ENCODE measurements at regions of chr4 and their contacts with region 1.

Region 1: DNA sequence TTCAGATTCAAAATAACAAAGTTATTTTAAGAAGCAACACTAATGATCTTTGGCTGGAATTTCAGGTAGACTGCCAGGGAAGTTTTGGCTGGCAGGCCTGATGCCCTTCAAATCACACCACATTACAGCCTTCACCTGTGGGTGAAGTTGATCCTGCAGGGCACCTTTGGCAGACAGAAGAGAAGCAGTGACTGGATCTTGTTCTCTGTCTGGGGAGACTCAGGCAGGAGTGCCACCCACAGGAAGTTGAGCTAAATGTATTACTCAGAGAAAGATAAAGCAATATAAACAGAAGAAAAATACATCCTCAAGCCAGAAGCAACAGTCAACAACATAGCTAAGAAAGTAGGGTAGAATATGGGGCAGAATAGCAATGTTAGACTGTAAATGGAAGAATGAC is 12.8 kb upstream of the CFAP299 start:
- DNase-seq: peak; percentile 63
- H3K4me3 Mint-ChIP-seq: no peak overlapping the region
- H3K27ac Mint-ChIP-seq: no peak overlapping the region
- H3K4me1 Mint-ChIP-seq: peaks cover 7% of the 10 kb centered on the region
- H3K27me3 Mint-ChIP-seq: no peaks in the 10 kb centered on the region
- CTCF ChIP-seq: peak; percentile 49

Region 2: GRCh38 chr4:79042079-79042674 is 1280.5 kb before region 1 on chr4:
- CTCF ChIA-PET with region 1: no interaction called
- POLR2A ChIA-PET with region 1: no interaction called
- intact Hi-C with region 1: loop called (anchors 10 kb)
- DNase-seq: peak; percentile 59
- H3K4me3 Mint-ChIP-seq: no peak overlapping the region
- H3K27ac Mint-ChIP-seq: no peak overlapping the region
- H3K4me1 Mint-ChIP-seq: no peaks in the 10 kb centered on the region
- H3K27me3 Mint-ChIP-seq: no peaks in the 10 kb centered on the region
- CTCF ChIP-seq: peak; percentile 56

Region 3: DNA sequence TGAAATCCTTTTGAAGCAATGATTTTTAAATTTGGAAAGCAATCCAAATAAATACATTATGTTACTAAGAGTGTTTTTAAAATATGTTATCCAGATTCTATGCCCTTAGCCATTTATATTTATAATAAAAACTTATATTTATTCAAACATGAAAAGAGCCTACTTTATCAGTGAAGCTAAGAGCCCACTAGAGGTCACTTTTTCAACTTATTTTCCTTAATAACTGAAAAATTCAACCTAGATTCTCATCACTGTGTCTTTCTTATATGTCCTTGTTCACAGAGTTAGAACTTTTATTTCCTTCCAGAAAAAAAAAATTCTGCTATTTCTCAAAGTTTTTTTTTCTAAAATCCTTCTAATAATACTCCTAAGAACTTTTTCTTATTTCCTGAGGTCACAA is 101.6 kb before region 1 on chr4:
- CTCF ChIA-PET with region 1: interaction called, 56 read pairs
- POLR2A ChIA-PET with region 1: interaction called, 6 read pairs
- intact Hi-C with region 1: loop called (anchors 1 kb)
- DNase-seq: peak; percentile 34
- H3K4me3 Mint-ChIP-seq: no peak overlapping the region
- H3K27ac Mint-ChIP-seq: no peak overlapping the region
- H3K4me1 Mint-ChIP-seq: no peaks in the 10 kb centered on the region
- H3K27me3 Mint-ChIP-seq: no peaks in the 10 kb centered on the region
- CTCF ChIP-seq: peak; percentile 23

Region 4: DNA sequence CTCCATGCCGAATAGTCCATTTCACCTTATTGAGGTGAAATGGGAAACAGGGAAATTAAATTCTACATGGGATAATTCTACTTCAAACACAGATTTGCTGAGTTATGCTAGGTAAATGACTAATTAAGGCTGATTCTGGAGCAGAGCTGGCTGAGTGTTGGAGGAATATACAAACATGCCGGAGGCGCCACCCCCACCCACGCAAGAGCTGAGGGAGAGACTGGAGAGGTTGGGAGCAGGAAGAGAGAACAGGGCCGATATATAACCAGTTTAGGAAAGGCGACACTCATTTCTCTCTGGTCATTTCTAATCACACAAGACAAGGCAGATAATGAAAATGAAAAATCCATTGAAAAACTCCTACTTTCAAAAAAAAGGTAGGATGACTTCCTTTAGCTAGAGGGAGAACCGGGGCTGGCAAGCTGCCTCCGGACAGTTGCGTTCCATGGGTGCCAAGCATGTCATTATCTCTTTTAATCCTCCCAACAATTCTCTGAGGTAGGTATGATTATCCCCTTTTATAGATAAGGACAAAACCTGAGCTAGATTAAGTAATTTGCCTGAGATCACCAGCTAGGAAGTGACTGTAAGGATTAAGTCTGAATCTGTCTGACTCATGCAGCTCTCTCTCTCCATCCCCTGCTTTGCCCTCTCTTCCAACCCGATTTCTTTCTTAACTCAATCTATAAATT is 14.8 kb before region 1 on chr4:
- CTCF ChIA-PET with region 1: interaction called, 13 read pairs
- POLR2A ChIA-PET with region 1: interaction called, 3 read pairs
- intact Hi-C with region 1: no loop called
- DNase-seq: peak; percentile 78
- H3K4me3 Mint-ChIP-seq: peak overlapping the region; percentile 59
- H3K27ac Mint-ChIP-seq: peak overlapping the region; percentile 53
- H3K4me1 Mint-ChIP-seq: peaks cover 43% of the 10 kb centered on the region
- H3K27me3 Mint-ChIP-seq: no peaks in the 10 kb centered on the region
- CTCF ChIP-seq: no peak